GM10248 (cell line): ENCODE measurements at regions of chr17 and their contacts with region 1.

Region 1: GRCh38 chr17:16304830-16305229 is 48.4 kb downstream of the CENPV start:
- DNase-seq: peak; percentile 20
- CTCF ChIP-seq: peak; percentile 34

Region 2: DNA sequence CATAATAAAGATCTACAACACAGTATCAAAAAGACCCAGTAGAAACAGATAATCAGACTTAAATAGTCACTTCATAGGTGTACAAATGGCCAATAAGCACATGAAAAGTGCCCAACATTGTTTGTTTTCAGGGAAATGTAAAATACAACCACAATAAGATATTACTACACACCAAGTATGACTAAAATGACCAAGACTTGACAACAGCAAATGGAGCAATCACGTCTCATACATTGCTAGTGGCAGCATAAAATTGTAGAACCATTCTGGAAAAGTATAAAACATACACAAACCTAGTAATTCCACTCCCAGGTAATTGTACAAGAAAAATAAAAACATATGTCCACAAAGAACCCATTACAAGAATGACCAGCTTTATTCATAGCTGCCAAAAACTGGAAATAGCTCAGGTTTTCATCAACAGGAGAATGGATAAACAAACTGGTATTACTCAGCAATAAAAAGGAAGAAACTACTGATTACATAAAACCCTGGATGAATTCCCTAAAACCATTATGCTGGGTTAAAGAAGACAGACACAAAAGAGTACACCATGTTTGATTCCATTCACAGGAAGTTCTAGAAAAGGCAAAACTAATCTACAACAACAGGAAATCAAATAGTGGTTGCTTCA is 219.6 kb before region 1 on chr17:
- CTCF ChIA-PET with region 1: no interaction called
- POLR2A ChIA-PET with region 1: no interaction called
- DNase-seq: no peak
- CTCF ChIP-seq: no peak

Region 3: DNA sequence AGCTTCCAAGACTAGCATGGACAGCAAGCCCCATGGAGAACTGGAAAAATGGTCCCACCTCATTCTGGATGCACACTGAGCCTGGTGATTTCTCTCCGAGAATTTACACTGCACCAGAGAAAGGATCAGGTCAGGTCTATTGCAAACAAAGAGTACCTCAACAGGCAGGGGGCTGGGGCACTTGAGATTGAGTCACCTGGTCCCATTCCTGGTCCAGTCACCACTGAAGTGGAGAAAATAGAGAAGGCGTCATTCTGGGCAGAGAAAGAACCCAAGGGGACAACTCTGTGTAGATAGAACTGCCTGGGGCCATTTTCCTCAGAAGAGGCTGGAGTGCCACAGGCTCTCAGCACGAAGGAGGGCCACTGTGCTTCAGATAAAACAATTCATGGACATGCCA is 10.0 kb after region 1 on chr17:
- CTCF ChIA-PET with region 1: interaction called, 10 read pairs
- POLR2A ChIA-PET with region 1: interaction called, 3 read pairs
- DNase-seq: no peak
- CTCF ChIP-seq: no peak

Region 4: DNA sequence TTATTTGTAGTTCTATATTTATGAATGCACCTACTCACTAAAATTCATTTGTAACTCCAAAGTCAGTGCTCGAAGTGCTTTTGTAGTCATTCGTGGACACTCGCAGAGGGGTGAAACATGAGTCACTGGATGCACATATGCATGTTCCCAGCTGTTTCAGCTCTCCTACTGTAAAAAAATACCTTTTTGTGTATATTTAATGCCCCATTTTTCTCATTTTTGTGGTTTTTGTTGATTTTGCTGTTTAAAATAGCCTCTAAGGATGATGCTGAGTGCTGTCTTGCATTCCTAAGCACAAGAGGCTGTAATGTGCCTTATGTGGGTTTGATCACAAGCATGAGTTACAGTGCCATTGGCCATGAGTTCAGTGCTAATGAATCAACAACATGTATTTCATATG is 17.8 kb after region 1 on chr17:
- CTCF ChIA-PET with region 1: interaction called, 29 read pairs
- POLR2A ChIA-PET with region 1: interaction called, 3 read pairs
- DNase-seq: no peak
- CTCF ChIP-seq: no peak